B cell (primary cell): ENCODE measurements at regions of chr22 and their contacts with region 1.

Region 1: DNA sequence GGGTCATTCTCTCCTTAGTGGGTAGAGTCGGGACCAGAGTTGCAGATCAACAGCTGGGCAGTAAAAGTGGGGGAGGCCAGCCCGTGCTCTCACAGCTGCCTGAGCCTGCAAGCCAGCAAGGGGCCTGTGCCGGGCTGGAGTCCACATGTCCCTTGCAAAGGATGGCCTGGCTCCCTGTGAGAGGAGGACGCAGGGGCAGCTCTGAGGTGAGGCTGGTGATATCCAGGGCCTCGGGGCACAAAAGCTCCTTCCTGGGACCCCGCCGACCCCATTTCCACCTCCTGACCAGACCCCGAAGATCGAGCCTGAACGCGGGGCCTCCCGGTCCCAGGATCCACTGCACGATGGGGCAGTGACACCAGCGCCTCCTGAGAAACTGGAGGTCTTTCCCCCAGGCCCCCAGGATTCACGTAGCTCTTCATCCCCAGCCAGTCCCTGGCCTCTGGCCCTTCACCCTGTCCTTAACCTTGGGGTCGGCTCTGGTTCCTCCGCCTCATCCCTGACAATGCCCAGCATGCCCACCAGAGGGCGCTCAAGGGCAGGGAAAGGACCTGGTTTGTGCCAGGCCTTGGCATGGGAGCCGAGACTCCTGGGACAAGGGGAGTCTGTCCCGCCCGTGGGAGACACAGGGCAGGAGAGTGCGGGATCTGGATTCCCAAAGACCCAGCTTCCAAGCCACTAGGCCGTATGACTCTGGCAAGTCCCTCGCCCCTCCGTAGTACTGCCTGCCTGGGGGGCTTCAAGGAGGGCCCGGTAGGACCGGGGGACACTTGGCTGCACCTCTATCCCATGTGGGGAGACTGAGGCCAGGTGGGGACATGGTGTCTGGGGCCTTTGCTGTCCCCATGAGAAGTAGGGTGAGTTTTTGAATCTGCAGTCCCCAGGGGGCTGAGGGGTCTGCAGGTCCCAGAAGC is 17.8 kb upstream of the WNT7B start:
- DNase-seq: peak; percentile 75
- ATAC-seq: peak; percentile 65
- H3K4me3 ChIP-seq: no peak overlapping the region
- H3K4me3 Mint-ChIP-seq: no peak overlapping the region
- H3K27ac ChIP-seq: no peak overlapping the region
- H3K27ac Mint-ChIP-seq: no peak overlapping the region
- H3K4me1 ChIP-seq: peaks cover 13 to 29% of the 10 kb centered on the region in 2 donors
- H3K4me1 Mint-ChIP-seq: peaks cover 32% of the 10 kb centered on the region
- H3K27me3 ChIP-seq: peaks cover 0 to 7% (median 0%) of the 10 kb centered on the region in 4 experiments
- H3K27me3 Mint-ChIP-seq: no peaks in the 10 kb centered on the region
- CTCF ChIP-seq: peak; percentile 94

Region 2: GRCh38 chr22:46006379-46007002 is 11.7 kb after region 1 on chr22:
- CTCF ChIA-PET with region 1: interaction called, 101 read pairs
- POLR2A ChIA-PET with region 1: interaction called, 3 read pairs
- intact Hi-C with region 1: no loop called
- DNase-seq: peak; percentile 88
- ATAC-seq: peak; percentile 90
- H3K4me3 ChIP-seq: no peak overlapping the region
- H3K4me3 Mint-ChIP-seq: no peak overlapping the region
- H3K27ac ChIP-seq: no peak overlapping the region
- H3K27ac Mint-ChIP-seq: no peak overlapping the region
- H3K4me1 ChIP-seq: peaks cover 3 to 10% of the 10 kb centered on the region in 2 donors
- H3K4me1 Mint-ChIP-seq: peaks cover 6% of the 10 kb centered on the region
- H3K27me3 ChIP-seq: peaks cover 0 to 13% (median 0%) of the 10 kb centered on the region in 4 experiments
- H3K27me3 Mint-ChIP-seq: no peaks in the 10 kb centered on the region
- CTCF ChIP-seq: peak; percentile 90

Region 3: DNA sequence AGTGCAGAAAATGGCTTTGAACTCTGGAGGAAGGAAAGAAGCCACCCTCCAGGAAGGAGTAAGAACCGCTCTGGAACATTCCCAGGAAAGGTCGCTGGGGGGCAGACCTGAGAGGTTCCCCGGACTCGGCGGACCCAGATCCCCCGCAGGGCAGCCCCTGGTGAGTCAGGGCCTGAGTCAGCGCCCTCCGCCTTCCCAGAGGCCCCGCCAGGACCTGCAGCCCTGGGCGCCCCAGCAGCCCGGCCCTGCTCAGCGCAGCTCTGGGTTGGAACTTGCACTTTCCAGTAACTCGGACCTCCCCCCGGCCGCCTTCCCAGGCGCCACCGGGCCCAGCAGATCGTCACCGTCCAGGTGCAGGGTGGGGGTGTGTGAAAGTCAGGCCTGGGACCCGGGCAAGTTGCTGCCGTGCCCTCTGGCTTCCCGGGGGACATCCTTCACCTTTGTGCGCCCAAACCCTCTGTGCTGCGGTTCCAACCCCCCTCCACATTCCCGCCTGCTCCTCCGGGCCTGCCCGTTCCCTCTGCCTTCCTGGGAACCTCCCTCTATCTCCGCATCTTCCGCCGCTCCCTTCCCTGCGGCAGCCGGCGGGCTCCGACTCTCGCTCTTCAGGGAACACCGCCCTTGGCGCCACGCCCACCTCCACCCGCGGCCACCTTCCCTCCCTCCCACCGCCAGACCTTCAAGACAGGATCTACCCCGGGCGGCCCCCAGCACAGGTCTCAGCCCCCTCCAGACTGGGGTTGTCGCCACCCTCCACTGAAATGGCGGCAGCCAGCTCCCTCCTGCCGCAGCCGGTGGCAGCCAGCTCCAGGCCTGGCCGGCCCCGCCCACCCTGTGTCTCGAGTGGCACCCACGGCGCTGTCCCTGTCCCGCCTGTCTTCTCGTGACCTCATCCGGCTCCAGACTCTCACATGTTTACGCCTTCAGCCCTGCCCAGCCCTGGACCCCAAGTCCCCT is 19.0 kb after region 1 on chr22:
- CTCF ChIA-PET with region 1: interaction called, 101 read pairs
- POLR2A ChIA-PET with region 1: interaction called, 5 read pairs
- intact Hi-C with region 1: loop called (anchors 2 kb)
- DNase-seq: peak; percentile 81
- ATAC-seq: peak; percentile 95
- H3K4me3 ChIP-seq: peak overlapping the region; percentile 8 to 88 (median 83)
- H3K4me3 Mint-ChIP-seq: peak overlapping the region; percentile 93
- H3K27ac ChIP-seq: peak overlapping the region; percentile 90 to 91
- H3K27ac Mint-ChIP-seq: peak overlapping the region; percentile 92
- H3K4me1 ChIP-seq: peaks cover 3 to 17% of the 10 kb centered on the region in 2 donors
- H3K4me1 Mint-ChIP-seq: peaks cover 10% of the 10 kb centered on the region
- H3K27me3 ChIP-seq: peaks cover 0 to 3% (median 0%) of the 10 kb centered on the region in 4 experiments
- H3K27me3 Mint-ChIP-seq: no peaks in the 10 kb centered on the region
- CTCF ChIP-seq: peak; percentile 75

Region 4: DNA sequence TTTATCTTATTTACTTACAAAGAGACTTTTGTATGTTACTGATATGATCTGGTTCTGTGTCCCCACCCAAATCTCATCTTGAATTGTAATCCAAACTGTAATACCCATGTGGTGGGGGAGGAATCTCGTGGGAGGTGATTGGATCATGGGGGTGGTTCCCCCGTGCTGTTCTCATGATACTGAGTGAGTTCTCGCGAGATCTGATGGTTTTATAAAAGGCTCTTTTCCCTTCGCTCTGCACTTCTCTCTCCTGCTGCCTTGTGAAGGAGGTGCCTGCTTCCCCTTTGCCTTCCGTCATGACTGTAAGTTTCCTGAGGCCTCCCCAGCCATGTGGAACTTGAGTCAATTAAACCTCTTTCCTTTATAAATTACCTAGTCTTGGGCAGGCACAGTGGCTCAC is 24.6 kb after region 1 on chr22:
- CTCF ChIA-PET with region 1: interaction called, 12 read pairs
- POLR2A ChIA-PET with region 1: no interaction called
- intact Hi-C with region 1: no loop called
- DNase-seq: no peak
- ATAC-seq: no peak
- H3K4me3 ChIP-seq: no peak overlapping the region
- H3K4me3 Mint-ChIP-seq: no peak overlapping the region
- H3K27ac ChIP-seq: no peak overlapping the region
- H3K27ac Mint-ChIP-seq: no peak overlapping the region
- H3K4me1 ChIP-seq: peaks cover 0 to 2% of the 10 kb centered on the region in 2 donors
- H3K4me1 Mint-ChIP-seq: no peaks in the 10 kb centered on the region
- H3K27me3 ChIP-seq: peaks cover 0 to 15% (median 2%) of the 10 kb centered on the region in 4 experiments
- H3K27me3 Mint-ChIP-seq: peaks cover 7% of the 10 kb centered on the region
- CTCF ChIP-seq: no peak

Region 5: GRCh38 chr22:46035742-46036557 is 41.2 kb after region 1 on chr22:
- CTCF ChIA-PET with region 1: interaction called, 11 read pairs
- POLR2A ChIA-PET with region 1: no interaction called
- intact Hi-C with region 1: no loop called
- DNase-seq: peak; percentile 100
- ATAC-seq: peak; percentile 92
- H3K4me3 ChIP-seq: peak overlapping the region; percentile 47 to 94 (median 87)
- H3K4me3 Mint-ChIP-seq: peak overlapping the region; percentile 87
- H3K27ac ChIP-seq: peak overlapping the region; percentile 90
- H3K27ac Mint-ChIP-seq: peak overlapping the region; percentile 95
- H3K4me1 ChIP-seq: peaks cover 15 to 16% of the 10 kb centered on the region in 2 donors
- H3K4me1 Mint-ChIP-seq: peaks cover 18% of the 10 kb centered on the region
- H3K27me3 ChIP-seq: no peaks in the 10 kb centered on the region
- H3K27me3 Mint-ChIP-seq: no peaks in the 10 kb centered on the region
- CTCF ChIP-seq: no peak

Region 6: GRCh38 chr22:46122511-46122971 is 127.8 kb after region 1 on chr22:
- CTCF ChIA-PET with region 1: interaction called, 533 read pairs
- POLR2A ChIA-PET with region 1: no interaction called
- intact Hi-C with region 1: no loop called
- DNase-seq: peak; percentile 79
- ATAC-seq: peak; percentile 71
- H3K4me3 ChIP-seq: no peak overlapping the region
- H3K4me3 Mint-ChIP-seq: no peak overlapping the region
- H3K27ac ChIP-seq: no peak overlapping the region
- H3K27ac Mint-ChIP-seq: no peak overlapping the region
- H3K4me1 ChIP-seq: peaks cover 4 to 9% of the 10 kb centered on the region in 2 donors
- H3K4me1 Mint-ChIP-seq: no peaks in the 10 kb centered on the region
- H3K27me3 ChIP-seq: no peaks in the 10 kb centered on the region
- H3K27me3 Mint-ChIP-seq: no peaks in the 10 kb centered on the region
- CTCF ChIP-seq: peak; percentile 96

Region 7: DNA sequence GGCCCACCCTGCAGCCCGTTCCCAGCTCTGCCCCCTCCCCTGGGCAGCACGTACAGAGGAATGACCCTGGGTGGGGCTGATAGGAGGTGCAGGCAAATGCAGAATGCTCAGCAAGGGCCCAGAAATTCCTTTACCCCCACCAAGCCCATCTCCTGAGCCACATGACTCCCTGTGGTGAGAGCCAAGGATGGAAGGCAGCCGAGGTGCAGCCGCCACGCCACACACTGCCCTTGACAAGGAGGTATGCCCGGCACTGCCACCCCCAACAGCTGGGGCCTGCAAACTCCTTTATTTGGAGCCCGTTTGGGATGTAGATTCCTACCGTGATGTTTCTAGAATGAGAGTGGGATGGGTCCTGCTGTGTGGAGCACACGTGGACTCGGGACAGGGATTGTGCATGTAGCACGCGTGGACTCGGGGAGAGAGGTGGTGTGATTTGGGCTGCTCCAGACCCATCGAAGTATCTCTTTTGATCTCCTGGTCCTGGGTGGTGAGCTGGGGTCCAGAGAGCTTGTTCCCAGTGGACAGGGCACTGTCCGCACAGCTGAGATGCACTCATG is 314.9 kb after region 1 on chr22:
- CTCF ChIA-PET with region 1: interaction called, 17 read pairs
- POLR2A ChIA-PET with region 1: no interaction called
- intact Hi-C with region 1: loop called (anchors 1 kb)
- DNase-seq: no peak
- ATAC-seq: no peak
- H3K4me3 ChIP-seq: no peak overlapping the region
- H3K4me3 Mint-ChIP-seq: no peak overlapping the region
- H3K27ac ChIP-seq: no peak overlapping the region
- H3K27ac Mint-ChIP-seq: no peak overlapping the region
- H3K4me1 ChIP-seq: no peaks in the 10 kb centered on the region
- H3K4me1 Mint-ChIP-seq: no peaks in the 10 kb centered on the region
- H3K27me3 ChIP-seq: no peaks in the 10 kb centered on the region
- H3K27me3 Mint-ChIP-seq: no peaks in the 10 kb centered on the region
- CTCF ChIP-seq: no peak